Adrenal gland (tissue), 19 donors: ENCODE measurements at regions of chr2 and their contacts with region 1.

Region 1: GRCh38 chr2:224650815-224651439 is 65.2 kb downstream of the CCDC195 start:
- DNase-seq: peak in 2 of 7 donors; percentile 8 to 13
- H3K4me3 ChIP-seq: no peak overlapping the region
- H3K27ac ChIP-seq: no peak overlapping the region
- H3K4me1 ChIP-seq: no peaks in the 10 kb centered on the region
- H3K27me3 ChIP-seq: no peaks in the 10 kb centered on the region
- CTCF ChIP-seq: peak; percentile 67 to 85 (median 74)
- POLR2A ChIP-seq: no peak

Region 2: GRCh38 chr2:224357098-224357901 is 293.6 kb before region 1 on chr2:
- intact Hi-C with region 1: loop called in 1 of 2 experiments (anchors 2 kb)
- DNase-seq: peak; percentile 36 to 77 (median 53)
- H3K4me3 ChIP-seq: no peak overlapping the region
- H3K27ac ChIP-seq: no peak overlapping the region
- H3K4me1 ChIP-seq: no peaks in the 10 kb centered on the region
- H3K27me3 ChIP-seq: no peaks in the 10 kb centered on the region
- CTCF ChIP-seq: peak; percentile 65 to 94 (median 85)
- POLR2A ChIP-seq: no peak

Region 3: DNA sequence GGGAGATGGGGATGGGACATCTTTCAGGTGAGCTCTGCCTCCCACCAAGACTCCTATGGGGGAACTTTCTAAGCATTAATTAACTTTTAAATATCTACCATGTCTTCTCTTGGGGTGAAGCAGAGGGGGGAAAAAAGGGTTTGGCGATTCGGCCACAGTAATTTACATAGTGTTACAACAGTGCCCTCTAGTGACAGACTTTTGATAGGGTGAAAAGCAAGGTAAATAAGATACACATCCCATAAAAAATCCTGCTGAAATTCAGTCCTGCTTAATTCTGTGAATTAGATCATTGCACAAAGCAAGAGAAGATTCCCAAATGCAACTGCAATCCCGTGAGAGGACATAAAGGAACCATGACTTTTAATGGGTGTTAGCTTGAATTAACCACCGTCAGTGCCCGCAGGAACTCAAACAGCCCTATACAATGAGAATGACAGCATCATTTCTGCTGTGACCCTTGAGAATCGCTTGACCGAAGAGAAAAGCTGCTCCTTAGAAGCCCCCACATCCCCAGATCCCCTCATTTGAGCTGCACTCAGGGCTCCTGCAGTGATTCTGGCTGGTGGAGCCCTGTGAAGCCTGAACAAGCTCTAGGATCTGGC is 281.8 kb before region 1 on chr2:
- intact Hi-C with region 1: loop called in 1 of 2 experiments (anchors 5 kb)
- DNase-seq: peak in 1 of 7 donors; percentile 16
- H3K4me3 ChIP-seq: no peak overlapping the region
- H3K27ac ChIP-seq: no peak overlapping the region
- H3K4me1 ChIP-seq: no peaks in the 10 kb centered on the region
- H3K27me3 ChIP-seq: no peaks in the 10 kb centered on the region
- CTCF ChIP-seq: peak; percentile 29 to 74 (median 53)
- POLR2A ChIP-seq: no peak

Region 4: DNA sequence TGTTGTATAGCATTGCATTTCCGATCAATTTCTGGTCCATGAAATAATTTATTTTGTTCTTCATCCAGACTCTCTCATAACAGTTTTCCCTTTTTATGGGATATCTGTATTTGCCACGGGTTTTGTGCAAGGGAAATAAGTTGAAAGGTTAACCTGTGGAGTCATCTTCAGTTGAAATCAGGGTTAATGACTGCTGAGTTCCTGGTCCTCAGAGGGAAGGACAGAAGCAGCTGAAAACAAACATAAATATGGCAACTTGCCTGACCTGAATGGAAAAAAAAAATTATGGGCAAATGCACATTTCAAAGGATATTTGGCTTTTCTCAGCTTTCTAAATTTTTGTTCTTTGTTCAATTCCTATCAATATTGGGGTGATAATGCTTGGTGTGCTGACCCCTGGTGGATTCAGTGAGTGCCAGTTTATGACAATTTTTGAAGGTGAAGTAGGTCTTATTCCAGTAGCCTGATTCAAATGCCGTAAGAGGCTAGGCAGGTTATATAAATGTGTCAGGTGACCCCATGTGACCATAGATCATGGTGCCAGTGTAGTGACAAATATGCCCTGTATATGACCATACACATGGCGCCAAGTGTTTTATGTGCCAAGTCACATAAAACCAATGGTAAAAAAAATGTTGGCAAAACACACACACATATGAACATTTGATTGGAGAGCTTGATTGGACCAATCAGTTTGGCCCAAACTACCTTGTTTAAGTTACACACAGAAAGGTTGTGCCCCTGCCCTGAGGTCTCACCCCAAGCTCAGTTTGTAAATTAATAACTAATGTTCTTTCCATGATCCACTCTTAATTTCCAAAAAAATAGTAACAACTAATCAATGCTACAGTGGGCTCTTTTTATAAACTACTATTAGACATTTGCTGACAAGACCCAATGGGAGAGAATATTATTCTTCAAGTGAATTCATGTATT is 201.4 kb before region 1 on chr2:
- intact Hi-C with region 1: loop called in 1 of 2 experiments (anchors 10 kb)
- DNase-seq: peak in 1 of 7 donors; percentile 12
- H3K4me3 ChIP-seq: no peak overlapping the region
- H3K27ac ChIP-seq: no peak overlapping the region
- H3K4me1 ChIP-seq: no peaks in the 10 kb centered on the region
- H3K27me3 ChIP-seq: no peaks in the 10 kb centered on the region
- CTCF ChIP-seq: peak; percentile 29 to 57 (median 45)
- POLR2A ChIP-seq: no peak

Region 5: GRCh38 chr2:224545884-224546644 is 104.9 kb before region 1 on chr2:
- intact Hi-C with region 1: no loop called
- DNase-seq: no peak
- H3K4me3 ChIP-seq: no peak overlapping the region
- H3K27ac ChIP-seq: no peak overlapping the region
- H3K4me1 ChIP-seq: peaks cover 9 to 35% of the 10 kb centered on the region in 2 donors
- H3K27me3 ChIP-seq: no peaks in the 10 kb centered on the region
- CTCF ChIP-seq: no peak
- POLR2A ChIP-seq: no peak